ENCODE measurements at regions of chr9 and their contacts with region 1.

Region 1: GRCh38 chr9:38687387-38687842 is 32.5 kb downstream of the FAM240B start:
- DNase-seq: no peak
- CTCF ChIP-seq: no peak

Region 2: DNA sequence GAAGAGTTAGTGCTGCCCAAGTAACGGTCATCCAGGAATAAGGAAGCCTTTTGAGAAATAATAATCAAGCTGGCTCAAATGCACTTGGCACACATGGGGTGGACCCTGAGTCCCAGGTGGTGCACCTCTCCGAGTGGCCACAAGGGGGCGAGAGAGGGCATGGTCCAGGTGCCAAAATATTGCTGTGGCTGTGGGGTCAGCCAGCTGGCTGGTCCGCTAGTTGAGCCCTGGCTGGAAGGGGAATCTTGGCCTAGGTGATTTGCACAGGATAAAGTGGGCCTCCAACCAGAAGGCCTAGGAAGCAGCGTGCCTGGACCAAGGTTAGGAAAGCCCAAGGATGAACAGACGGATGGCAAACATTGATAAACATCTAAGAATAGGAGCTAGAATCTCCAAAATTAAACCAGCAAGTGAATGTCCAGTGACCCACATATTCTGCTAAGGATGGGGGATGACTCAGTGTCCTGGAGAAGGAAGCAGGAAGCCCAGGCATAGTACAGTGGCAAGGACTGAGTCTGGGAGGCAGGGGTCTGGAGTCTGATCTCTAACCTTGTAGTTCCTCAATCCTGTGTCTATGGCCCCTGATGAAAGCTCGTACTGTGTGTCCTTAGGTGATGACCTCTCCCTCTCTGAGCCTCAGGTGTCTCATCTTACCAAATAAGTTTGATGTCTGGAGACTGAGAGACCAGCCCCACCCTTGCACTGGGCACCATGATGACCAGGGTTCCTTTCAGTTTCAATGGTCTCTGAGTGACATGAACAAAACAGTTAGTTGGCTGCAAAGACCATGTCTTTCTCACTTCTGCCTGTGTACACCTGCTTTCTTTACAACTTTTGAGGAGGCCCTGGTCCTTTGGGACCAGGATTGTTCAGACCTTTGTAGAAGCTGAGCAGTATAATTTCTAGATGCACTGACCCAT is 599.1 kb before region 1 on chr9:
- in situ Hi-C with region 1: no loop called
- DNase-seq: peak; percentile 74
- CTCF ChIP-seq: peak; percentile 93

Region 3: DNA sequence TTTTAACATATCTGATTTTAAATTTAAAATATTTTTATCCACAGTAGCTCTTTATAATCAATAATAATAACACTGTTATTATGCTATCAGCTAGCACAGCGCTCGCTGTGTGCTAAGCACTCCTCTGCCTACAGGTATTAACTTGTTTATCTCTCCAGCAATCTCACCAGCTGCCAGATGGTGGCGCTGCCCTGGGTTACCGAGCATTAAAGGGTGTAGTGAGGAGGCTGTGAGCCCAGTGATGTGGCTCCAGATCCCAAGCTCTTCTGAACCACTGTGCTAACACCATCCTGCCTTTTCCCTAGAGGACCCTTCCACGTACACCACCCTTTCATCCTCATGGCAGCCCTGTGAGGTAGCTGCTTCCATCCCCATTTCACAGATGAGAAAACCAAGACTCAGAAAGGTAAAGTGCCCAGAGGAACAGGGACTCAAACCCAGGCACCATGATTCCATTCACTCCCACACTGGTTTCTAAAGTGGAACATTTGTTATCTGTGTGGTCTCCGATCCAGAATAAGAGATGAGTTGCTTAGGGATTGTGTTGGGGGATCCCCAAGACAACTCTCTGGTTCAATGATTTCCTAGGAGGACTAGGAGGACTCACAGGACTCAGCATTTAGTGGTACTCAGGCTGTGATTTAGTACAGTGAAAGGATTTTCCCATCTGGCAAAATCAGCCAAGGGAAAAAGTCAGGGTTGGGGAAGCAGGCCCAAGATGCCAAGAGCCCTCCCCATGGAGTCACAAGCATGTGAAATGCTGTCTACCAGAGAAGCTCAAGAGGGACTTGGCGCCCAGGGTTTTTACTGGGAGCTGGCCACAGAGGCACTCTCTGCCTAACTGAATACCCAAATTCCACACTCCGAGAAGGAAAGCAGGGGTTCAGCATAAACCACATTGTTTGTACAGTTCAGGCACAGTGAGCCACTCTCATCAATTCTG is 270.1 kb before region 1 on chr9:
- in situ Hi-C with region 1: loop called (anchors 25 kb)
- DNase-seq: peak; percentile 58
- CTCF ChIP-seq: peak; percentile 69